Mammary epithelial cell (primary cell): ENCODE measurements at regions of chr9 and their contacts with region 1.

Region 1: DNA sequence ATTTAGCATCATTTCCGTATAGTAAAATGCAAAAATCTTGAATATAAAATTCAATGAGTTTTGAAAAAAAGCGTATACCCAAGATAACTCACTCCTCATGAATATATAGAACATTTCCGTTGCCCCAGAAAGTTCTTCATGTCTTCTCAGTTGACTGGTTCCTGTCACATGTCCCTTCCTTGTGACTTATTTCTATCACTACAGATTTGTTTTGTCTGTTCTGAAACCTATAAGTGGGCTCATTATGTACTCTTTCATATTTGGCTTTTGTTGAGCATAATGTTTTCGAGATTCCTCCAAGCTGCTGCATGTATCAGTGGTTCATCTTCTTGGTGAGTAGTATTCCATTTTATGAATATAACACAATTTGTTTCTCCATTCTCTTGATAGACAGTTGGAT is 11.0 kb upstream of the HACD4 start:
- DNase-seq: no peak
- H3K4me3 ChIP-seq: no peak overlapping the region
- H3K27ac ChIP-seq: no peak overlapping the region
- H3K4me1 ChIP-seq: no peaks in the 10 kb centered on the region
- H3K27me3 ChIP-seq: peaks cover 2% of the 10 kb centered on the region
- CTCF ChIP-seq: no peak

Region 2: GRCh38 chr9:21096172-21096900 is 53.9 kb after region 1 on chr9:
- CTCF ChIA-PET with region 1: no interaction called
- dilution Hi-C with region 1: loop called (anchors 5 kb)
- in situ Hi-C with region 1: no loop called
- intact Hi-C with region 1: no loop called
- DNase-seq: peak; percentile 82
- H3K4me3 ChIP-seq: peak overlapping the region; percentile 21 to 34 (median 31)
- H3K27ac ChIP-seq: peak overlapping the region; percentile 38
- H3K4me1 ChIP-seq: peaks cover 15% of the 10 kb centered on the region
- H3K27me3 ChIP-seq: no peaks in the 10 kb centered on the region
- CTCF ChIP-seq: no peak

Region 3: DNA sequence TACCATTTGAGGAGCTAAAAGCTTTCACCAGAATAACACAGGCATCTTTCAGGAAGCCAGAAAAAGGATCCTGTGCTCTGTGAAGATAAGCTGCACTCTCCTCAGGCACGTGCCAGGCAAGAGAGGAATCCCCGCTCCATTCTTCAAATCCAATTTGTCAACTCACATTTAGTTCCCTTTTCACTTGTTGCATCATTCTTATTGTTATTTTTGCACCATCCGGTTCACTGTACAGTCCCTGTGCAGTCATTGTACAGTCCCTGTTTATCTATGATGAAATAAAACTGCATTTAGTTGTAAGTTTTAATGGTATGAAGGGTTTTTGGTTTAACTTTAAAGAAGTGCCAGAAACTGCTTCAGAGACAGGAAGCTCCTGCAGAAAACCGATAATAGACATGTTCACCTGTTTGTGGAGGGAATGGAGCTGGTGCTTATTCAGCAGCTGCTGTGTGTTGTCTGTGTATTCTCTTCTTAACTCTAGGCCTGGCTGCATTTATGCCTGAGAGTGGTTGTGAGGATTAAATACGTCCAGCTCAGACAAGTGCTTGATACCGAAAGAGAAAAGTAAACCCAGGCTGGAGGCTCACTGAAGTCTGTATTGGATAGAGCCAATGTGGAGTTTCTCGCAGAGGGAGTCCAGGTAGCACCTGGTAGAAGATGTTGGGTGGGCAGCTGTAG is 76.8 kb after region 1 on chr9:
- CTCF ChIA-PET with region 1: no interaction called
- dilution Hi-C with region 1: no loop called
- in situ Hi-C with region 1: no loop called
- intact Hi-C with region 1: no loop called
- DNase-seq: no peak
- H3K4me3 ChIP-seq: no peak overlapping the region
- H3K27ac ChIP-seq: no peak overlapping the region
- H3K4me1 ChIP-seq: no peaks in the 10 kb centered on the region
- H3K27me3 ChIP-seq: peaks cover 13% of the 10 kb centered on the region
- CTCF ChIP-seq: no peak